Kidney (tissue), 22 donors: ENCODE measurements at regions of chr5 and their contacts with region 1.

Region 1: DNA sequence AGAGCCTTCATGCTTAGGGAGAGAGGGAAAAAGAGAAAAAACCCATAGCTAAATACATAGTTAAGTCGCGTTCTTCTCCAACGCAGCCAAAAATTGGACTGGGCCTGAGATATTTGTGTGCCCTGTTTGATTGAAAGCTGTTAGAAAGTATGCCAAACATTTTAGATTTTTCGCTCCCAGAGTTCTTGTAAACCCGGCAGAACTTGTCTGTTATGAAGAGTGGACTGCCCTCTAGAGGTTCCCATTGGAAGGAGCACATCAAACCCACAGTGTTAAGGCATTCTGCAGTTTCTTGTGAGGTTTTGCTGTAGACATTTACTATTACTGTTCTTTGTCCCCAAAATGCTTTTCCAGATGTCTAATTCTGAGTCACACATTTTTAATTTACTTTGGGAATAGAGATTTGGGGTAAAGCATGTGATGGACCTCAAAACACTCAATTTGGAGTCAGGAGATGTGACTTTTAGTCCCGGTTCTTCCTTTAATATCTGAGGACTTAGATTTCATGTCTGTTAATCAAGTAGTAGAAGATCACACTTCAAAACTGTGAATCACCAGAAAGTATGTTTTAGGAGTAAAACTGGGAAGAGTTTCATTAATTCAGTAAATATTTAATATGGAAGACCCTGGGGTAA is 96.6 kb downstream of the PCSK1 start:
- DNase-seq: peak in 4 of 5 donors; percentile 68 to 90 (median 80)
- H3K4me3 ChIP-seq: peak overlapping the region in 1 of 3 donors; percentile 20
- H3K27ac ChIP-seq: no peak overlapping the region
- H3K4me1 ChIP-seq: peaks cover 0 to 22% (median 13%) of the 10 kb centered on the region in 3 donors
- H3K27me3 ChIP-seq: no peaks in the 10 kb centered on the region
- CTCF ChIP-seq: peak; percentile 78

Region 2: DNA sequence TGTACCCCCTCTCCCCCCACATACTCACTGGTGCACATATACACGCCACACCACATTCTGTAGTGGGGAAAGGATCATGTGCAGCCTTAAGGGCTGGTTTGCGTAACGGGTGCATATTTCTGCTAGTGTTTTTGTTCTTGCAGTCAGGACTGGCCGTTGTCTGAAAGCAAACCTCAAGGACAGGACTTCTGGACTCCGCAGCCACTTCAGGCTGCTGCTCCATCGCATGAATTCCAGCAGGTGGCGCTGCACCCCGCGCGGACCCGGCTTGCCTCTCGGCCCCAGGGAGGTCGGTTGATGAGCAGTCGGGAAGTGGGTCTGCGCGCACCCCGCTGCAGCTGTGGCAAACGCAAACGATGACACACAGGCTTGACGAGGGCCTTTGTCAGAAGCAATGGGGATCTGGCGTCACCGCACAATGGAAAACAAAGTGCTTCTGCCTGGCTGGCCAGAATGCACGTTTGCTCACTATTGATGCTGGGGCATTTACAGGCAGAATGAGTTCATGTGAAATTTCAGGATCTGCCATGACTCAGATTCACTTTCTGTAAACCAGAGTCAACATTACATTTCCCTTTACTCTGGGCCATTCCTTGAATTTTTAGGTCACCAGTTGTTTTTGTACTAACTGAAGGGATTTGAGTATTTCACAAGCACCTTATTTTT is 477.7 kb before region 1 on chr5:
- intact Hi-C with region 1: loop called (anchors 10 kb)
- DNase-seq: peak; percentile 89 to 95 (median 92)
- H3K4me3 ChIP-seq: peak overlapping the region; percentile 1 to 43 (median 40)
- H3K27ac ChIP-seq: peak overlapping the region; percentile 80 to 92
- H3K4me1 ChIP-seq: peaks cover 0 to 26% (median 18%) of the 10 kb centered on the region in 3 donors
- H3K27me3 ChIP-seq: no peaks in the 10 kb centered on the region
- CTCF ChIP-seq: peak; percentile 99

Region 3: GRCh38 chr5:95959888-95960666 is 376.4 kb before region 1 on chr5:
- intact Hi-C with region 1: loop called (anchors 10 kb)
- DNase-seq: peak in 4 of 5 donors; percentile 30 to 53 (median 48)
- H3K4me3 ChIP-seq: peak overlapping the region; percentile 65 to 95 (median 87)
- H3K27ac ChIP-seq: peak overlapping the region; percentile 91 to 92
- H3K4me1 ChIP-seq: peaks cover 0 to 28% (median 5%) of the 10 kb centered on the region in 3 donors
- H3K27me3 ChIP-seq: peaks cover 4% of the 10 kb centered on the region
- CTCF ChIP-seq: no peak

Region 4: DNA sequence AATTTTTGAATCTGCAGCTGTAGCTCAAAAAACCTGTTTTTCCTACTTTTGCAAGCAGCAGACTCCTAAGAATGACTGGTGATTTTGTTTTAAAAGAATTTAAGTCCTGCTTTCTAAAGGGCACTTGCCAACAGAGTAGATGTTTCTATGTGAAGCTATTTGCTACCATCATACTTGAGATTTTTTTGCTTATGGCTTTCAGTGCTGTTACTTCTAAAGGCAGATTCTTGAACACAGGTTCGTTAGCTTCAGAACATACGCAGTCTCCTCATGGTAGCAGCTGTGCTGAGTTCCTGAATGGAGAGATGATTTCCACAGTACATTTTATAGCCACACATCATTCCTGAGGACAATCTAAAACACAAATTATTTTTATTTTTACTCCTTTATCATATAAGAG is 350.5 kb before region 1 on chr5:
- intact Hi-C with region 1: no loop called
- DNase-seq: no peak
- H3K4me3 ChIP-seq: no peak overlapping the region
- H3K27ac ChIP-seq: no peak overlapping the region
- H3K4me1 ChIP-seq: peaks cover 0 to 11% (median 0%) of the 10 kb centered on the region in 3 donors
- H3K27me3 ChIP-seq: no peaks in the 10 kb centered on the region
- CTCF ChIP-seq: no peak

Region 5: GRCh38 chr5:96548947-96549346 is 212.5 kb after region 1 on chr5:
- intact Hi-C with region 1: no loop called
- DNase-seq: no peak
- H3K4me3 ChIP-seq: no peak overlapping the region
- H3K27ac ChIP-seq: no peak overlapping the region
- H3K4me1 ChIP-seq: no peaks in the 10 kb centered on the region
- H3K27me3 ChIP-seq: no peaks in the 10 kb centered on the region
- CTCF ChIP-seq: no peak